Activated CD4-positive, alpha-beta T cell treated with anti-CD3 and anti-CD28 coated beads for 36 hours (primary cell): ENCODE measurements at regions of chr10 and their contacts with region 1.

Region 1: DNA sequence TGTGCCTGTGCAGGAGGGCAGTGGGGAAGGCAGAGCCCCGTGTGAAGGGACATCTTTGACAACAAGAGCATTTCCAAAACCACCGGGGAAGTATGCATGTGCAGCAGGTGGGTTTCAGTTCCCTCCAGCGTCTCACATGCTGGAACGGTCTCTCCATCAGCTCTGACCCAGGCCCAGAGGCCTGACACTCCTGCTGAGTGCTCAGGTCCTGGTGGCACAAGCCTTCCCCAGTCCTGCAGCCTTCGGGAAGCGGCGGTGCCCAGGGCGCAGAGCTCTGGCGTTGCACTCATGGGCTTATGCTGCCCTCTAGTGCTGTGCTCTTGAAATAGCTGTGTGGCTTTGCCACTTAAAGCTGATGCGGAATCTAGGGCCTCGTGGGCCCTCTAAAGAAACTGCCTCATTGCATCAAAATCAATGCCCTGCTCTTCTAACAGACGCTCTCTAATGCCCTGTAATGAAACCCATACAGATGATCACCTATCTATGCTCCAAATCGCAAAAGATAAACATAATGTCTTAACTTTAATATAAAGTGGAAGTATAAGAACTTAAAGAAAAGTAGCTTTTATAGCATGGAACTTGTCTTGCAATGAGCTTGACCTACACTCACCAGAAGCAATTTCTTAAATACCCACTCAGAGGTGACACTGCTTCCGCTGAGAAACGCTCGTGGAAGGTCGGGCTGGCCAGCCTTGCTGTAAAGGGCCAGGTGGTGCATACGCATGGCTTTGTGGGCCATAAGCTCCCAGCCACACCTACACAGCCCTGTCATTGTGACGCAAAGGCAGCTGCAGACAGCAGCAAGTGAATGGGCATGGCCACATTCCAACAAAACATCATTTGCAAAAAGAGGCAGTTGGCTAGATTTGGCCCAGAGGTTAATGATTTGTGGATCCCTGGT is 38.6 kb downstream of the CLRN3 start:
- DNase-seq: peak; percentile 74
- ATAC-seq: peak; percentile 84
- H3K4me3 Mint-ChIP-seq: no peak overlapping the region
- H3K27ac Mint-ChIP-seq: no peak overlapping the region
- H3K4me1 Mint-ChIP-seq: no peaks in the 10 kb centered on the region
- H3K27me3 Mint-ChIP-seq: peaks cover 7% of the 10 kb centered on the region

Region 2: DNA sequence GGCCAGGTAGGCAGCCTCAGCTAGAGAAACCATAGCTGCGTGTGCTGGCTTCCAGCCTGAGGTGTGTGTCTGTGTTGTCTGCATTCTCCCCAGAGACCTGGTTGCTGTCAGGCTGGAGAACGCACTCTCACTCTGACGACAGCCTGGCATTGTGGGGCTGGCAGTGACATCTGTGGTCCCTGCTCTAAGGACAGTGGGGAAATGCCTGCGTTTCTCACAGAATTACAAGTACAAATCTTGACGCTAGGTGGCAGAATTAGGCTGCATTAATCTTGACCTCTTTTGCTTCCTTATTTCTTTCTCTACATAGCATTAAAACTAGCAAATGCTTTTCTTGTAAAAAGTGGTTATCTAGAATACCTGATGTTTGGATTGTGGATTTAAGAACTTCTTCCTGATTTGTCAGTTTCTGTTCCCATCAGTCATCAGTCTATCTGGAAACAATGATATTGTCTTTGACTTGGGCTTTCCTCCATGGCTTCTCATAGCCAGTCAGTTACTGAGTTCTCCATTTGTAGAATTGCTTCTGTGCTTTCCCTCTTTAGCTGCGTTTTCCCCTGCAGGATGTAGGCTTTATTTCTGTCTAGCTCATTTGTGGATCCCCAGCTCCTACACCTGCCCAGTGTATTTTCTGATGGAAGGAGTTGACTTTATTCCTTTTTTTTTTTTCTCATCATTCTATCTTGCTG is 1871.7 kb before region 1 on chr10:
- CTCF ChIA-PET with region 1: interaction called, 3 read pairs
- POLR2A ChIA-PET with region 1: no interaction called
- intact Hi-C with region 1: loop called (anchors 2 to 10 kb)
- DNase-seq: no peak
- ATAC-seq: peak; percentile 57
- H3K4me3 Mint-ChIP-seq: no peak overlapping the region
- H3K27ac Mint-ChIP-seq: no peak overlapping the region
- H3K4me1 Mint-ChIP-seq: no peaks in the 10 kb centered on the region
- H3K27me3 Mint-ChIP-seq: peaks cover 14% of the 10 kb centered on the region

Region 3: GRCh38 chr10:127243490-127244272 is 610.4 kb before region 1 on chr10:
- CTCF ChIA-PET with region 1: interaction called, 11 read pairs
- POLR2A ChIA-PET with region 1: no interaction called
- intact Hi-C with region 1: loop called in 1 of 2 experiments (anchors 2 kb)
- DNase-seq: peak; percentile 70
- ATAC-seq: peak; percentile 60
- H3K4me3 Mint-ChIP-seq: no peak overlapping the region
- H3K27ac Mint-ChIP-seq: no peak overlapping the region
- H3K4me1 Mint-ChIP-seq: no peaks in the 10 kb centered on the region
- H3K27me3 Mint-ChIP-seq: peaks cover 9% of the 10 kb centered on the region

Region 4: DNA sequence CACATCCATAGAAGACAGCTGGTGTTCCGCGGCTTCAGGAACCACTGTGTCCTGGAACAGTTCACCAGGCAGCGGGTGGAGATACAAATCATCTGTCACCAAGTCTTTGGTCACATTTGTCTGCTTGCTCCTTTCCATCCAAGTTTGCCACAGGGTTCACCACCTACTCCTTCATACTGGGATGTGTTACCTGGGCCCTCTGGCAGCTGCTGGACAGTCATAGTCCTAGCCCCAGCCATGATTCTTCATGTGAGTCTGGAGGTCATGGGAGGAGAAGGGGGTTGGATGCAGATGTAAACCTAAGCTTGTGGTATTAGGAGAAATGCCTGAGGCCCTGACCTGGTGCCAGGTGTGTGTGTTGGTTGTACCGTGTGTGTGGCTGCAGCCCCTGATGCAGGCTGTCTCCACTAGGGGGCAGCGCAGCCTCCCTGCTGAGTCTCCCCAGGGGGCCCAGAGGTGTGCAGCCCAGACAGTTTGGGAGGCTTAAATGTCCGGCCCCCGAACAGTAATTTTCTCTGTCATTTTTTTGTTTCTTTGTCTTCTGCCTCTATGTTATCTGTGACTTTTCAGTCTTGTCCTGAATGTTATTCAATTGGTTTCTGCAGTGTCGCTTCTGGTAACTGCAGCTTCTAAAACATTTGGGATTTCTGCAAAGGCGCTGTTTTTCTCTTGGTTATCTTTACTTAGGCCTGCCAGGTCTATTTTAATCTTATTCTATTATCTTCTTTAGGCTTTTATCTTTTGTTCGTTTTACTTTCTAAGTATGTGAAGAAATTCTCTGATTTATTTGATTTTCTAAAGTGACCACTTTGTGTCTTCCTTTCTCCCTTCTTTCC is 290.2 kb before region 1 on chr10:
- CTCF ChIA-PET with region 1: interaction called, 5 read pairs
- POLR2A ChIA-PET with region 1: no interaction called
- intact Hi-C with region 1: loop called (anchors 1 kb)
- DNase-seq: peak; percentile 70
- ATAC-seq: peak; percentile 42
- H3K4me3 Mint-ChIP-seq: no peak overlapping the region
- H3K27ac Mint-ChIP-seq: no peak overlapping the region
- H3K4me1 Mint-ChIP-seq: no peaks in the 10 kb centered on the region
- H3K27me3 Mint-ChIP-seq: peaks cover 14% of the 10 kb centered on the region

Region 5: GRCh38 chr10:127715782-127716378 is 138.2 kb before region 1 on chr10:
- CTCF ChIA-PET with region 1: interaction called, 34 read pairs
- POLR2A ChIA-PET with region 1: no interaction called
- intact Hi-C with region 1: loop called (anchors 1 kb)
- DNase-seq: no peak
- ATAC-seq: no peak
- H3K4me3 Mint-ChIP-seq: no peak overlapping the region
- H3K27ac Mint-ChIP-seq: no peak overlapping the region
- H3K4me1 Mint-ChIP-seq: no peaks in the 10 kb centered on the region
- H3K27me3 Mint-ChIP-seq: peaks cover 1% of the 10 kb centered on the region

Region 6: DNA sequence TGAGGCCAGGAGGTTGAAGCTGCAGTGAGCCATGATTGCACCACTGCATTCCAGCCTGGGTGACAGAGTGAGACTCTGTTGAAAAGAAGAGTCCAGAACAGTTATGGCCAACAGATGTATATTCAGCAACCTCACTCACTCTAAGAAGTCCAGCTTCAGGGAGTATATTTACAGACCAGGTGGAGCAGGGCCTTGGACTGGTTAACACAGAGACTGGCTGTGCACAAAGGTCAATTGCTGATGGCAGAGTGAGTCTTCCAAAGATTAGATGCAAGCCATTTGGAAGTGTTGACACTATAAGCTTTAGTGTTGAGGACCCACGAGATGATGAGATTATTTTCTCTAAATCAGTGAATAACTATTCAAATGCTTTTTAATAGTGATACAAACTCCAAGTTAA is 13.7 kb after region 1 on chr10:
- CTCF ChIA-PET with region 1: interaction called, 13 read pairs
- POLR2A ChIA-PET with region 1: no interaction called
- intact Hi-C with region 1: no loop called
- DNase-seq: no peak
- ATAC-seq: no peak
- H3K4me3 Mint-ChIP-seq: no peak overlapping the region
- H3K27ac Mint-ChIP-seq: no peak overlapping the region
- H3K4me1 Mint-ChIP-seq: no peaks in the 10 kb centered on the region
- H3K27me3 Mint-ChIP-seq: peaks cover 19% of the 10 kb centered on the region